ENCODE measurements at regions of chr20 and their contacts with region 1.

Region 1: GRCh38 chr20:49484180-49485140 is 2.0 kb upstream of the KCNB1 start:
- DNase-seq: peak; percentile 85
- ATAC-seq: peak; percentile 84

Region 2: GRCh38 chr20:48308882-48309281 is 1175.6 kb before region 1 on chr20:
- intact Hi-C with region 1: no loop called
- DNase-seq: no peak
- ATAC-seq: no peak

Region 3: GRCh38 chr20:49338061-49338460 is 146.4 kb before region 1 on chr20:
- intact Hi-C with region 1: loop called (anchors 10 kb)
- DNase-seq: no peak
- ATAC-seq: no peak

Region 4: DNA sequence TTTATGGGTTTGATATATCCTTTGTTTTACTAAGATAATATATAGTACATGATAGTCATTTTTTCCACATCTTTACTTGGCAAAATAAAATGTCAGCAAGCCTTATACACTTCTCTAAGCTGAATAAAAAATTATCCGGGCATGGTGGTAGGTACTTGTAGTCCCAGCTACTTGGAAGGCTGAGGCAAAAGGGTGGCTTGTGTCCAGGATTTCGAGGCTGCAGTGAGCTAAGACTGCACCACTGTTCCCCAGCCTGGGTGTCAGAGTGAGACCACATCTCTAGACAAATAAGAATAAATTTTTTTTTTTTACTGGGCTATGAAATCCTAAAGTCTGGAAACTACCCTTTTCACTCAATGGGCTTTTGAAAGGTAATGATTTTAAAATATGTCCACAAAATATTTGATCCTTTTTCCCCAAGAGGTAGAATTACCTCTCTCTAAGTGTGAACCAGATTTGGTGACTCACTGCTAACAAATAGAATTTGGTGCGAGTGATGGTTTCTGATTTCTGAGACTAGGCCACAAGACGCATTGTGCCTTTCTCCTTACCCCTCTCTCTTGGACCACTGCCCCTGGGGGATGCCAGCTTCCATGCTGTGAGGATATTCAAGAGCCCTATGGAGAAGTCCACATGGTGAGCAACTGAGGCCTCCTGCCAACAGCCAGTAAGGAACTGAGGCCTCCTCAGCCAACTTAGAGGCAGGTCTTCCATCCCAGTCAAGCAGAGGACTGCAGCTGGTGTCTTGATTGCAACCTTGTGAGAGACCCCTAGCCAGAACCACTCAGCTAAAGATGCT is 122.4 kb before region 1 on chr20:
- intact Hi-C with region 1: loop called (anchors 10 kb)
- DNase-seq: no peak
- ATAC-seq: no peak